ENCODE measurements at regions of chr1 and their contacts with region 1.

Region 1: GRCh38 chr1:45521398-45522323 is at the start of gene PRDX1:
- DNase-seq: peak; percentile 97
- H3K4me3 Mint-ChIP-seq: peak within 1 kb of the TSS; percentile 98
- H3K27ac Mint-ChIP-seq: peak within 1 kb of the TSS; percentile 91
- H3K4me1 Mint-ChIP-seq: peaks cover 44% of the 10 kb centered on the region
- H3K27me3 Mint-ChIP-seq: peaks cover 1% of the 10 kb centered on the region
- total RNA-seq, gene PRDX1: 635 and 655 TPM in 2 replicates

Region 2: DNA sequence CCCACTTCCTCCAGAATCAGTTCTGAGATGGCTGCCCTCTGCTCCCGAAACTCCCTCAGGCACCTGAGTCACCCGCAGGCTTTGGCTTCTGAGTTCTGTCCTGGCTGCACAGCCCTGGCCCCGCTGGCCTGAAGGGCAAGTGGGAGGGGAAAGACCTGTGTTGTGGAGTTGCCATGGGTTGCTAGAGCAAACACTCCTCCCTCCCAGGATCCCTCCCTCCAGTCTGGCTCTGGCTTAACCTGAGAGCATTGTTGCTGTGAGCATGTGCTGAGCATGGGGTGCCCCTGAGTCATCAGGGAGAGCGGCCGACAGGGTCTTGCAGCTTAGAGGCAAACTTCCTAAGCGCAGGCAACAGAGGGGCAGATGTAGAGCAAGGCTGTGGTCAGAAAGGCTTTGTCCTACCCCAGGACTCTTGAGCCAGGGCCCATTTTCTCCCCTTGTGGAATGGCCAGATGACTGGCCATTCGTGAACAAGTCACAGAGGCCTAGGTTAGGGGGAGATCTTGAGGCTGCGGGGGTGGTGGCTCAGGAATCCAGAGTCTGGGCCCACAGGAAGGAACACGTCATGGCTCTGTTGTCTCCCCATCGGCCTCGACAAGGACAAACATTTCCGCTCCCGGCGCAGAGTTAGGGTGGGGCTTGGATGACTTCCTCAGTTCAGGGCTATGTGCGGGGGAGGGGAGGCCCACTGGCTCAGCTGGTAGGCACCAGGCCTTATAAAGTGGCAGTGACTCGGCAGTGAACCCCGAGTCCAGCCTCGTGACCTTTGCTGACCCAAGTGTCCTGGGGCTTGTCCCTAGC is 714.2 kb before region 1 on chr1 and contains the start of gene DYNLT4:
- intact Hi-C with region 1: loop called (anchors 5 kb)
- DNase-seq: peak; percentile 84
- H3K4me3 Mint-ChIP-seq: peak within 1 kb of the TSS; percentile 68
- H3K27ac Mint-ChIP-seq: peak within 1 kb of the TSS; percentile 99
- H3K4me1 Mint-ChIP-seq: peaks cover 88% of the 10 kb centered on the region
- H3K27me3 Mint-ChIP-seq: no peaks in the 10 kb centered on the region
- total RNA-seq, gene DYNLT4: 0.44 TPM in 1 of 2 replicates, not detected in the other

Region 3: DNA sequence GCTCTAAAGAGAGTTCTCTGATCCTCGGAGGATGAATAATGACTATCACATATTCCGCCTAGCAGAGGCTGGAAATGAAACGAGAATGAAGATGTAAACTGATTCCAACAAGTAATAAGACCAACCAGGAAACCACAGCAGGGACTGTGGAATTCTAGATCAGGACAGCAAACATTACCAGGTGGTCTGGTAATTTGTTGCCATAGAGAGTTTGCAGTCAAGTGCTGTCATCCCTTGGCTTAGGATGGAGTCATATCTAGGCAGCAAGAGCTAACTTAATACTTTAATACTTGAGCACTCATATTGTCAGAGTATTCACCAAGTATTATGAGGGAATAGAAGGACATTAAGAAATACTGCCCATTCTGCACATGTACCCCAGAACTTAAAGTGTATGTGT is 136.4 kb before region 1 on chr1:
- intact Hi-C with region 1: no loop called
- DNase-seq: no peak
- H3K4me3 Mint-ChIP-seq: no peak overlapping the region
- H3K27ac Mint-ChIP-seq: no peak overlapping the region
- H3K4me1 Mint-ChIP-seq: no peaks in the 10 kb centered on the region
- H3K27me3 Mint-ChIP-seq: peaks cover 5% of the 10 kb centered on the region

Region 4: GRCh38 chr1:45499415-45499769 is 22.3 kb before region 1 on chr1:
- intact Hi-C with region 1: loop called (anchors 1 kb)
- DNase-seq: no peak
- H3K4me3 Mint-ChIP-seq: peak overlapping the region; percentile 93
- H3K27ac Mint-ChIP-seq: peak overlapping the region; percentile 83
- H3K4me1 Mint-ChIP-seq: peaks cover 37% of the 10 kb centered on the region
- H3K27me3 Mint-ChIP-seq: no peaks in the 10 kb centered on the region

Region 5: DNA sequence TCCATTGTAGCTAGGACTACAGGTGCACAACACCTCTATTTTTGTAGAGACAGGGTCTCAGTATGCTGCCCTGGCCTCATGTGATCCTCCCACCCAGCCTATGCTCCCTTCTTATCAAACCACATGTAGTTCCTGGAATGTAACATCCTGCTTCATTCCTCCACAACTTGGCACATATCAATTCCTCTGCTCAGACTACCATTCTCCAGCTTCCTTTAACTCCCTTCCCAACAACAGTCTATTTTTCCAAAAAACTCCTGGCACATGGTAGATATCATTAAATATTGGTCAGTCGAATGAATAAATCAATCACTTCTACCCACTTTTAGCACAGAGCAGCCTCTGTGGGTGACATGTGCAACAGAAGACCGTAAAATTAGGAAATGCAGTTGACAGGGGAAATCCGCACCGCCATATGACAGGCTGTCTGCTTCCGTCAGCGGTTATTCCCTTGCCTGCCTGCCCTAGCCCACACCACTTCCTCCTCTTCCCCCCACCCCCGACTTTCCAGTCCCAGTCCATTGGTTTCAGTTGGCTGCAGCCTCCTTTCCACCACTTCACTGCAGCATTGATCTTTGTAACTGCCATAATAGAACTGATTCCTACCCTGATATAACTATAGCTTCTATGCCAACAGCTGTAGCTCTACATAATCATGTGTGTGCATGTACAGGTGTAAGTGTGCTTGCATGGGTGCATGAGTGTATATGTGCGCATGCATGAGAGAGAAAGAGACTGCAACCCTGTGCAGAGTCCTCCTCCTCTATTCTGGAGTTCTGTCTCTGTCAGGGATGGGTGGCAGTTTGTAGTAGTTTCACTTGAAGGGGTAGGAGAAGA is 22.1 kb after region 1 on chr1:
- intact Hi-C with region 1: loop called (anchors 1 kb)
- DNase-seq: peak; percentile 75
- H3K4me3 Mint-ChIP-seq: peak overlapping the region; percentile 38
- H3K27ac Mint-ChIP-seq: peak overlapping the region; percentile 54
- H3K4me1 Mint-ChIP-seq: peaks cover 36% of the 10 kb centered on the region
- H3K27me3 Mint-ChIP-seq: peaks cover 10% of the 10 kb centered on the region

Region 6: DNA sequence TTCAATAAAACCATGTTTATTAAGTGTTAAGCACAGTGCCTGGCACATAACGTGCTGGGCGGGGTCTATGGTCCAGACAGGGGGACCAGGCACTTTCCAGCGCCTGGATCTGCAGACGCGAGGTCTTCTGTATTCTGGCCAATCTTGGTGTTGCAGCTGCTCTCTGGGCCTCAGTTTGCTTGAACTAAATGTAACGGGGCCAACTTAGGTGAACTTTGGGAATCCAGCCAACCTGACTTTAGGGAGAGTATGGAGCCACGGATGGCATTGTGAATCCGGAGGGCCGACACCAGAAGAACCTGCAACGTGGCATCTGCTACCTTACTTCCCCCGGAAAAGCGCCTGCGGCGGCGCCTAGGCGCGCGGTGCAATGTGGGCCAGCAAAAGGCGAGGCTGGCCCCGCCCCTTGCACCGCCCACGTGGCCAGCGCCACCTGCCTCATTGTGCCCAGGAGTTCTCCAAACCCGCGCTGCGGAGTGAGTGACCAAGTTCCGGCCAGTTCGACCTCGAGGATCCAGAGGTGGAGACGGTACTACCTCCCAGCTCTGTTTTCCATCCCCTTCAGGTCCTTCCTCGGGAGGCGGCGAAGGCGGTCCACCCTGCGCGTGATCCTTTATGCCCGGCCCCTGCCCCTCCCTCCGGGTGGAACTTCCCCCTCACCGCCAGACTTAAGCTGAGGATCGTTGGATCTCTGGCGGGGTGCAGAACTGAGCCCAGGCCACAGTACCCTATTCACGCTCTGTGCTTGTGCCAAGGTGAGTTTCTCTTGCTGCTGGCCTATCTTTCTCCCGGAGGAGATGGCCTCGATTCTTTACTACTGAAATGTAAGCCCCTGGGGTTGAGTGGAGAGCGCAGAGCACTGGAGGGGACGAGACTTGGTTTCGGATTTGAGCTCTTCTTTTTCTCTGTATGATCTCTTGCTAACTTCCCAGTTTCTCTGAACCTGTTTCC is 29.0 kb after region 1 on chr1 and contains the start of gene AKR1A1:
- intact Hi-C with region 1: loop called (anchors 1 kb)
- DNase-seq: peak; percentile 85
- H3K4me3 Mint-ChIP-seq: peak within 1 kb of the TSS; percentile 93
- H3K27ac Mint-ChIP-seq: peak within 1 kb of the TSS; percentile 92
- H3K4me1 Mint-ChIP-seq: peaks cover 29% of the 10 kb centered on the region
- H3K27me3 Mint-ChIP-seq: peaks cover 5% of the 10 kb centered on the region
- total RNA-seq, gene AKR1A1: 192 and 194 TPM in 2 replicates

Region 7: GRCh38 chr1:45569962-45570581 is 48.4 kb after region 1 on chr1:
- intact Hi-C with region 1: loop called (anchors 2 kb)
- DNase-seq: peak; percentile 57
- H3K4me3 Mint-ChIP-seq: no peak overlapping the region
- H3K27ac Mint-ChIP-seq: no peak overlapping the region
- H3K4me1 Mint-ChIP-seq: peaks cover 9% of the 10 kb centered on the region
- H3K27me3 Mint-ChIP-seq: no peaks in the 10 kb centered on the region

Region 8: DNA sequence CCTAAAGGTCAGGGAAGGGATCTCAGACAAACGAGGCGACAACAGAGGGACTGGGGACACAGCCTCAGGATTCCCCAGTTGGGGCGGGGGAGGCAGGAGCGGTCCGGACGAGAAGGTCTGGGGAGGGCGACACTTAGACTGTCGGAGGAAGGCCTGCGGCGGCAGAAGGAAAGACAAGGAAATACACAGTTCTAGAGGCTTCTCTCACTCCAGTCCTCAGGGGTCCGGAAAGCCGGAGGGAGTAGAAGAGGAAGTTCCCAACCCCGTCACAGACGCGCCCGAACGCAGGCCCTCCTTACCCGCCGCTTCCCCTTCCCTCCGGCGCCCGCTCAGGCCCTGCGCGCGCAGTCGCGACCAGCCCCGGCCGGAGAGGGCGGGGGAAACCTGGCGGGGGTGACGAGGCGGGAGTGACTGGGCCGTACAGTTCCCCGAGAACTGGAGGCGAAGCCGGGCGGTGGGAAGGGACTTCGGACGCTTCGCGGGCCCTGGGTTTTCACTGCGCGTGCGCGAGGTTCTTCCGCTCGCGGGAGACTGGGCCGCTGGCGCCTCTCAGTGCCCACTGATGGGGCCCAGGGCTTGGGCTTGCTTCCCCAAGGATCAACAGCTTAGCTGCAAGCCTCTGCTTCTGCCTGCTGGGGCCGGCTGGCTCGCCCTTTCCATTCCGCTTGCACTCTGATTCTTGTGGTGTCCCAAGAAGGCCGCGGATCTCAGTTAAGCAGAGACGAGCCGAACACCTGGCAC is 228.8 kb after region 1 on chr1 and contains the start of gene IPP:
- intact Hi-C with region 1: loop called (anchors 1 kb)
- DNase-seq: peak; percentile 96
- H3K4me3 Mint-ChIP-seq: peak within 1 kb of the TSS; percentile 98
- H3K27ac Mint-ChIP-seq: peak within 1 kb of the TSS; percentile 96
- H3K4me1 Mint-ChIP-seq: peaks cover 10% of the 10 kb centered on the region
- H3K27me3 Mint-ChIP-seq: no peaks in the 10 kb centered on the region
- total RNA-seq, gene IPP: 12.3 and 13.9 TPM in 2 replicates

Measured in activated T-helper 1 cell treated with anti-CD3 and anti-CD28 coated beads, Interleukin-12 subunit alpha, Interleukin-12 subunit beta, Interleukin-2, Interleukin-4 antibody, amounts not matched to agents 30 ng/mL and 10 ng/mL and 1 ng/mL, durations not matched to agents 14 hours and 24 hours and 36 hours (primary cell).